B cell (primary cell): ENCODE measurements at regions of chr11 and their contacts with region 1.

Region 1: DNA sequence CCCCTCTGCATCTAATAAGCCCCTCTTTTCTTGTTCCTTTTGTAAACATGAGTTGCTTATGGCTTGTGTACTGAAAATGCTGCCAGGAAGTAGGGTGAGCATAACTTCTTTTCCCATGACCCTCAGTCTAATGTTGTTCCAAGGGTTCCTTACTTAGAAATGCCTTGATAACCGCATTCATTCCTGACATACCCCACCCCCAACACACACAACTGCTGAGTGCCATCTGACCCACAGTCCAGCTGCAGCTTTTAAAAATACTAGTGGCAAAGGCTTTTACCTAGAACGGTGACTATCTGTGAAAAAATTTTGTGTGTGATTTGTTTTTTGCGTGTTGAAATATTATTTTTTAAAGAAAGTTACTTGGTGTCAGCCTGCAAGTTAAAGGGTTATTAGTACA is 52.6 kb downstream of the ARHGAP42 start:
- DNase-seq: no peak
- ATAC-seq: no peak
- H3K4me3 ChIP-seq: no peak overlapping the region
- H3K4me3 Mint-ChIP-seq: no peak overlapping the region
- H3K27ac ChIP-seq: no peak overlapping the region
- H3K27ac Mint-ChIP-seq: no peak overlapping the region
- H3K4me1 ChIP-seq: peaks cover 20 to 27% of the 10 kb centered on the region in 2 donors
- H3K4me1 Mint-ChIP-seq: peaks cover 38% of the 10 kb centered on the region
- H3K27me3 ChIP-seq: no peaks in the 10 kb centered on the region
- H3K27me3 Mint-ChIP-seq: no peaks in the 10 kb centered on the region
- CTCF ChIP-seq: no peak

Region 2: DNA sequence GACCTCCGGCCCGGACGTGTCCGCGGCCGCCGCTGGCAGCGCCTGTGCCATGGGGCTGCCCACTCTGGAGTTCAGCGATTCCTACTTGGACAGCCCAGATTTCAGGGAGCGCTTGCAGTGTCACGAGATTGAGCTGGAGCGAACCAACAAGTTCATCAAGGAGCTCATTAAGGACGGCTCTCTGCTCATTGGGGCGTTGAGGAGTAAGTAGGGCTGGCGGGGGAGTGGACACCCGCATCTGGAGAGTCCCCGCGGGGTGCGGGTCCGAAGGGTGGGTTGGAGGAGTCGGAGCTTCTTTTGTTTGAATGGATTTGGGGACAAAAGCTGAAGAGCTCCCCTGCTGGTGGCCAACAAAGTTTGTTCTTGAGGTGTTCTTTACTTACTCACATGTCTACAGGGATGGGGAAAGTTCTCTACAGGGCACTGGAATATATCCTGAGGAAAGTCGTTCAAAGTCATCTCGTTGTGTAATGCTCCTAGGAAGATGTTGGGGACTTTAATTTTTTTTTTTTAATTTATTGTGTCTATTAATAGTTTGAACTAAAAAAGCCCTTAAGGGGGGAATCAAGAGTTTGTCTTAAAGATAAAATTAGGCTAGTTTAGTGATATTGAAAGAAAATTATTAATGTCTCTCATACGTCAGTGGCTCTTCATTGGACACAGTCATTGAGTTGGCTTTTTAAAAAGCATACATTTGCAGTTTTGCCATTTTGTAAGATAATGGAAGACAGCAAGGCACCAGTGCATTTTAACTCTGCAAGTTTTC is 51.9 kb before region 1 on chr11:
- CTCF ChIA-PET with region 1: interaction called, 3 read pairs
- POLR2A ChIA-PET with region 1: no interaction called
- intact Hi-C with region 1: loop called (anchors 5 kb)
- DNase-seq: peak; percentile 77
- ATAC-seq: peak; percentile 48
- H3K4me3 ChIP-seq: peak overlapping the region; percentile 65 to 82 (median 80)
- H3K4me3 Mint-ChIP-seq: peak overlapping the region; percentile 98
- H3K27ac ChIP-seq: peak overlapping the region in 1 of 2 donors; percentile 62
- H3K27ac Mint-ChIP-seq: peak overlapping the region; percentile 93
- H3K4me1 ChIP-seq: peaks cover 36 to 47% of the 10 kb centered on the region in 2 donors
- H3K4me1 Mint-ChIP-seq: peaks cover 53% of the 10 kb centered on the region
- H3K27me3 ChIP-seq: no peaks in the 10 kb centered on the region
- H3K27me3 Mint-ChIP-seq: no peaks in the 10 kb centered on the region
- CTCF ChIP-seq: peak; percentile 76

Region 3: DNA sequence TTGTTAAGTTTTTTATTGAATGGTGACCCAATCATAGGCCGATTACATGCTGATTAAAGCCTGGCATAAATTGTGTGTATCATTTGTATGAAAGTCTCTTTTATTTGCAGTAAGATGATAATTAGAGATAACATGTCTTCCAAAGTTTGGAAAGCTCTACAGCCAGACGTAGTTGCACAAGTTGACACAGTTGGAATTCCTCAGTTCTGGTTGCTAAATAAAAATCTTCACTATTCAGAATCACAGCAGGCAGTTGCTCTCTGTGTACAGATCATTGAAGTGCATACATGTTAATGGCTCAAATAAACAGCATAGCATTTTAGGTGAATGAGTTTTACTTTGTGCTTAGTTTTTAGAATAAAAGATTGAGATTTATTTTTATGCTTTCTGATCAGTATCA is 16.9 kb after region 1 on chr11:
- CTCF ChIA-PET with region 1: no interaction called
- POLR2A ChIA-PET with region 1: no interaction called
- intact Hi-C with region 1: no loop called
- DNase-seq: no peak
- ATAC-seq: no peak
- H3K4me3 ChIP-seq: no peak overlapping the region
- H3K4me3 Mint-ChIP-seq: no peak overlapping the region
- H3K27ac ChIP-seq: no peak overlapping the region
- H3K27ac Mint-ChIP-seq: no peak overlapping the region
- H3K4me1 ChIP-seq: no peaks in the 10 kb centered on the region
- H3K4me1 Mint-ChIP-seq: peaks cover 8% of the 10 kb centered on the region
- H3K27me3 ChIP-seq: no peaks in the 10 kb centered on the region
- H3K27me3 Mint-ChIP-seq: no peaks in the 10 kb centered on the region
- CTCF ChIP-seq: no peak